B cell (primary cell): ENCODE measurements at regions of chr21 and their contacts with region 1.

Region 1: DNA sequence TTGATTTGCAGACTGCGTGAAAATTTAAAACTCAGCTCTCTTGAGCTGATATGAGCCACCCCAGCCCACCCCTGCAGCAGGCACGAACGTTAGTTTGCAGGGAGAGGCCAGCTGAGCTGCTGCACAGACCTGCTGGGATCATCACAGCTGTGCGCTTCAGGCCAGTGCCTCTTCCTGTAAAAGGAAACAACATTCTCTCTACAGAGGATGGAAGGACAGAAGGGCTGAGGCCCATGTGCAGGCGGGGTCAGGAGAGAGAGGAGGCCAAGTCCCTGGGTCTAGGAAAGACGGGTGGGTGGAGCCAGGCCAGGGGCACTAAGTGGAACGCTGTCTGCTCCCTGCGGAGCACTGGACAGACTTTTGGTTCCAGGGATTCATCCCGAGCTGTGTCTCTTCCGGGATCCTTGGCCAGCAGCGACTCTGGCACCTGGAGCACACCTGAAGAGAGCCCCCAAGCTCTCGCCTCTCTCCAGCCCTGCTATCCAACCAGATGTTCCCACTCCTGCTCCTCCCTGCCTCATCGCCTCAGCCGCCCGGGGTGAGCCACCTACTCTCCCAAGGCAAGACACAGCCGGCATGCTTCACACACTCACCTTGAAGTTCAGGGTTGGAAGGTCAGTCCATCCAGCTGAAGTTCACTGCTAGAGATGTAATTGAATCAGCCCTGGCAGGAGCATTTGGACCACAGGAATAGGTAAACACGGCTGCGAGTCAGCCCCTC is 42.4 kb downstream of the RSPH1 start:
- DNase-seq: no peak
- ATAC-seq: no peak
- H3K4me3 ChIP-seq: no peak overlapping the region
- H3K4me3 Mint-ChIP-seq: no peak overlapping the region
- H3K27ac ChIP-seq: no peak overlapping the region
- H3K27ac Mint-ChIP-seq: no peak overlapping the region
- H3K4me1 ChIP-seq: peaks cover 0 to 9% of the 10 kb centered on the region in 2 donors
- H3K4me1 Mint-ChIP-seq: peaks cover 6% of the 10 kb centered on the region
- H3K27me3 ChIP-seq: peaks cover 0 to 12% (median 2%) of the 10 kb centered on the region in 4 experiments
- H3K27me3 Mint-ChIP-seq: no peaks in the 10 kb centered on the region
- CTCF ChIP-seq: no peak

Region 2: DNA sequence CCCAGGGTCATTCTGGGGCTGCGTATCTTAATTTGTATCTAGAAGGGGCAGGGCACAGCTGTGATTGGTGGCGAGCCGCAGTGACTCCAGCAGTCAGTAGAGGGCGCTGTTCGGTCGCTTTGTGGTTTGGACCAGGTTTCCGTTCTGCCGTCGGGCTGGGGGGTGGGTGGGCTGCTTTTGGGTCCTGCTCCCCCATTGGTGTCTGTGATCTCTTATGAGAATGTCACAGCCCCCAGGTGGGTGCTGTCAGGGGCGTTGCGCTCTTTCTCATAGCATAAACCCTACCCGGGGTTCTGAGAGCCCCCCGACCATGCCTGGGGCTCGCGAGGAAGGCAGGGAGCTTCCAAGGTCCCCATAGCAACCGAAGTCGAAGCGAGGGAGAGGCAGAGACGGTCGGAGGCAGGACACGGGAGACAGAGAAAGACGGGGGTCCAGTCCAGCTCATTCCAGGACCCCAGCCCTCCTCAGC is 143.9 kb before region 1 on chr21:
- CTCF ChIA-PET with region 1: interaction called, 29 read pairs
- POLR2A ChIA-PET with region 1: no interaction called
- intact Hi-C with region 1: loop called (anchors 1 kb)
- DNase-seq: peak; percentile 75
- ATAC-seq: peak; percentile 76
- H3K4me3 ChIP-seq: no peak overlapping the region
- H3K4me3 Mint-ChIP-seq: no peak overlapping the region
- H3K27ac ChIP-seq: no peak overlapping the region
- H3K27ac Mint-ChIP-seq: no peak overlapping the region
- H3K4me1 ChIP-seq: peaks cover 7 to 14% of the 10 kb centered on the region in 2 donors
- H3K4me1 Mint-ChIP-seq: peaks cover 4% of the 10 kb centered on the region
- H3K27me3 ChIP-seq: peaks cover 0 to 42% (median 13%) of the 10 kb centered on the region in 4 experiments
- H3K27me3 Mint-ChIP-seq: peaks cover 26% of the 10 kb centered on the region
- CTCF ChIP-seq: peak; percentile 89

Region 3: GRCh38 chr21:42337830-42338728 is 115.6 kb before region 1 on chr21:
- CTCF ChIA-PET with region 1: interaction called, 10 read pairs
- POLR2A ChIA-PET with region 1: no interaction called
- intact Hi-C with region 1: loop called (anchors 1 kb)
- DNase-seq: peak; percentile 84
- ATAC-seq: peak; percentile 98
- H3K4me3 ChIP-seq: no peak overlapping the region
- H3K4me3 Mint-ChIP-seq: no peak overlapping the region
- H3K27ac ChIP-seq: no peak overlapping the region
- H3K27ac Mint-ChIP-seq: peak overlapping the region; percentile 11
- H3K4me1 ChIP-seq: peaks cover 7 to 8% of the 10 kb centered on the region in 2 donors
- H3K4me1 Mint-ChIP-seq: peaks cover 8% of the 10 kb centered on the region
- H3K27me3 ChIP-seq: peaks cover 0 to 10% (median 6%) of the 10 kb centered on the region in 4 experiments
- H3K27me3 Mint-ChIP-seq: peaks cover 17% of the 10 kb centered on the region
- CTCF ChIP-seq: peak; percentile 79

Region 4: GRCh38 chr21:42414928-42415769 is 38.5 kb before region 1 on chr21:
- CTCF ChIA-PET with region 1: no interaction called
- POLR2A ChIA-PET with region 1: no interaction called
- intact Hi-C with region 1: no loop called
- DNase-seq: peak; percentile 87
- ATAC-seq: peak; percentile 86
- H3K4me3 ChIP-seq: peak overlapping the region in 2 of 5 experiments; percentile 25 to 27
- H3K4me3 Mint-ChIP-seq: peak overlapping the region; percentile 77
- H3K27ac ChIP-seq: no peak overlapping the region
- H3K27ac Mint-ChIP-seq: peak overlapping the region; percentile 91
- H3K4me1 ChIP-seq: peaks cover 6 to 16% of the 10 kb centered on the region in 2 donors
- H3K4me1 Mint-ChIP-seq: peaks cover 32% of the 10 kb centered on the region
- H3K27me3 ChIP-seq: peaks cover 0 to 3% (median 1%) of the 10 kb centered on the region in 4 experiments
- H3K27me3 Mint-ChIP-seq: peaks cover 11% of the 10 kb centered on the region
- CTCF ChIP-seq: no peak